CD4-positive, alpha-beta T cell (primary cell): ENCODE measurements at regions of chr16 and their contacts with region 1.

Region 1: GRCh38 chr16:70770626-70771552 is 30.1 kb downstream of the VAC14 start:
- DNase-seq: peak; percentile 17 to 66 (median 45)
- ATAC-seq: peak; percentile 84
- H3K4me3 ChIP-seq: no peak overlapping the region
- H3K4me3 Mint-ChIP-seq: no peak overlapping the region
- H3K27ac ChIP-seq: no peak overlapping the region
- H3K27ac Mint-ChIP-seq: no peak overlapping the region
- H3K4me1 ChIP-seq: no peaks in the 10 kb centered on the region
- H3K4me1 Mint-ChIP-seq: no peaks in the 10 kb centered on the region
- H3K27me3 ChIP-seq: no peaks in the 10 kb centered on the region
- H3K27me3 Mint-ChIP-seq: no peaks in the 10 kb centered on the region
- CTCF ChIP-seq: peak; percentile 86

Region 2: DNA sequence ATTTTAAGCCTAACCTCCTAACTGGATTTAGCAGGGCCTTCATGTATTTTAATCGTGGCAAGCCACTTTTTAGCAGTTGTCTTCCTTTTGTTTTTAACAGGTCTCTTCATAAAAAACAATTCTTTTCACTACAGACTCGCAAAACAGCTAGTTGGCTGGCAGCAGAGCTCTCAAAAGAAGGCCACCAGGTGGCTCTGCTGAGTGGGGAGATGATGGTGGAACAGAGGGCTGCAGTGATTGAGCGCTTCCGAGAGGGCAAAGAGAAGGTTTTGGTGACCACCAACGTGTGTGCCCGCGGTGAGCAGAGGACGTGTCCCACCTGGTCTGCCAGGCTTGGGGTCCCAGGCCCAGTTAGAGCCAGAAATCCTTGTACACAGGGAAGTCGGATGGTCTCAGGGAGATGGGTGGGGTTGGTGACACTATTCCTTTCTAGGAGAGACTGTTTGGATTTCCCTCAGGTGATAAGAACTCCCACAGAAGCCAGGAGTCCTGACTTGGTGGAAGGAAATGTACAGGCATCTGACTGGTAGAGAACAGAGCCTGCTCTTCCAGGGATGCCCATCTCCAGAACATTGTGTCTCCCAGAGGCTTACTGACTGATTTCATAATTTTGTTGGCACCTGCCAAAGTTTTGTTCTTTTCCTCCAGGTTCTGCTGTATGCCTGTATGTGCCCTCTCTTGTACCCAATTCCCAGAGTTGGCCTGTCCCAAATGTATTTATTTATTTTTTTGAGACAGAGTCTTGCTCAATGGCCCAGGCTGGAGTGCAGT is 439.1 kb before region 1 on chr16:
- CTCF ChIA-PET with region 1: no interaction called
- POLR2A ChIA-PET with region 1: no interaction called
- intact Hi-C with region 1: loop called in 1 of 2 experiments (anchors 10 kb)
- DNase-seq: peak in 7 of 14 experiments; percentile 5 to 33 (median 15)
- ATAC-seq: peak; percentile 68
- H3K4me3 ChIP-seq: no peak overlapping the region
- H3K4me3 Mint-ChIP-seq: no peak overlapping the region
- H3K27ac ChIP-seq: no peak overlapping the region
- H3K27ac Mint-ChIP-seq: no peak overlapping the region
- H3K4me1 ChIP-seq: no peaks in the 10 kb centered on the region
- H3K4me1 Mint-ChIP-seq: no peaks in the 10 kb centered on the region
- H3K27me3 ChIP-seq: no peaks in the 10 kb centered on the region
- H3K27me3 Mint-ChIP-seq: no peaks in the 10 kb centered on the region
- CTCF ChIP-seq: peak; percentile 58

Region 3: DNA sequence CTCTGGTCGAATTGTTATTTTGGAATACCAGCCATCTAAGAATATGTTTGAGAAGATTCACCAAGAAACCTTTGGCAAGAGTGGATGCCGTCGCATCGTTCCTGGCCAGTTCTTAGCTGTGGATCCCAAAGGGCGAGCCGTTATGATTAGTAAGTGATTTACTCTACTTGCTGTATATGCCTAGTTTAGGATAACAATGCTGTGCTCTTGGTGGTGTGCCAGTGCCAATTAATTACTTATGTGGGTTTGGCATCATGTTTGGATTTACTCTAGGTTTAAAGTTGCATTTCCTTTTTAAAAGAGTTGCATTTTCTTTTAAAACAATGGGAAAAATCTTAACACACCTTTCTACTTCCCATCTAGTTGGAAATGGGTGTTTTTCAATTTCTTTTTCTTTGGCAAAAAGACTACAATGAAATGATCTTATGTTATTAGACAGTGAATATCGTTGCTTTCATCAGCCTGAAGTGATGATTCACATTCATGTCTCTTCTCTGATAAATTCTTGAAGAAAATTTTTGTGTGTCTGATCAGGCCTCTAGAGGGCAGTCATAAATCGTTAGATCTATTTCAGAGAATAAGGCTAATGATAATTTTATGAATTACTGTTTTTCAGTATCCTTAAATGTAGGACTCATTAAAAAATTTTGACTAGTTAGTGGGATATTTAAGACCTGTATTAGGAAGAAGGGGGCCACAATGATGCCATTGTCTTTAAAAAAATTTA is 241.7 kb before region 1 on chr16:
- CTCF ChIA-PET with region 1: no interaction called
- POLR2A ChIA-PET with region 1: no interaction called
- intact Hi-C with region 1: loop called in 1 of 2 experiments (anchors 1 kb)
- DNase-seq: peak in 4 of 14 experiments; percentile 17 to 61 (median 53)
- ATAC-seq: peak; percentile 45
- H3K4me3 ChIP-seq: no peak overlapping the region
- H3K4me3 Mint-ChIP-seq: peak overlapping the region; percentile 64
- H3K27ac ChIP-seq: no peak overlapping the region
- H3K27ac Mint-ChIP-seq: peak overlapping the region; percentile 65
- H3K4me1 ChIP-seq: peaks cover 43% of the 10 kb centered on the region
- H3K4me1 Mint-ChIP-seq: peaks cover 55% of the 10 kb centered on the region
- H3K27me3 ChIP-seq: no peaks in the 10 kb centered on the region
- H3K27me3 Mint-ChIP-seq: no peaks in the 10 kb centered on the region
- CTCF ChIP-seq: peak; percentile 45

Region 4: DNA sequence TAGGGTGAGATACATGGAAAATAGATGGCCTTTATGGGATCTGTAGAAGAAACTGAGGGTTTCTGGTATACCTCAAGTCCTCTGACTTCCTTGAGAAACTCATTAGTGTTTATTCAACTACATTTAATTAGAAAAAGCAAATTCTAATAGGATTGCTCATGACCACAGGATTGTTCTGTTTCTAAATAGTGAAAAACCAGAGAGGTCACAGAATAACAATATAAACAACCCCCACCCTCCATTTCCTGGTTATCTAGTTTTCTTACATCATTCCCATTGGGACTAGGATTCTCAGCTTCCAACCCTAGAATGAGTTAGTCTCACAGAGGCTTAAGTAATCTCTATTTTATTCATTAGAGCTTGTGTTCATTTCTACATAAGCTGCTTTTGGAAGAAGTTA is 217.2 kb before region 1 on chr16:
- CTCF ChIA-PET with region 1: no interaction called
- POLR2A ChIA-PET with region 1: no interaction called
- intact Hi-C with region 1: loop called in 1 of 2 experiments (anchors 10 kb)
- DNase-seq: no peak
- ATAC-seq: no peak
- H3K4me3 ChIP-seq: no peak overlapping the region
- H3K4me3 Mint-ChIP-seq: no peak overlapping the region
- H3K27ac ChIP-seq: no peak overlapping the region
- H3K27ac Mint-ChIP-seq: peak overlapping the region; percentile 56
- H3K4me1 ChIP-seq: no peaks in the 10 kb centered on the region
- H3K4me1 Mint-ChIP-seq: peaks cover 31% of the 10 kb centered on the region
- H3K27me3 ChIP-seq: no peaks in the 10 kb centered on the region
- H3K27me3 Mint-ChIP-seq: no peaks in the 10 kb centered on the region
- CTCF ChIP-seq: no peak

Region 5: GRCh38 chr16:70679666-70680494 is 91.0 kb before region 1 on chr16:
- CTCF ChIA-PET with region 1: no interaction called
- POLR2A ChIA-PET with region 1: interaction called, 3 read pairs
- intact Hi-C with region 1: loop called (anchors 1 kb)
- DNase-seq: peak in 2 of 14 experiments; percentile 4 to 24
- ATAC-seq: peak; percentile 60
- H3K4me3 ChIP-seq: no peak overlapping the region
- H3K4me3 Mint-ChIP-seq: no peak overlapping the region
- H3K27ac ChIP-seq: no peak overlapping the region
- H3K27ac Mint-ChIP-seq: no peak overlapping the region
- H3K4me1 ChIP-seq: peaks cover 4% of the 10 kb centered on the region
- H3K4me1 Mint-ChIP-seq: no peaks in the 10 kb centered on the region
- H3K27me3 ChIP-seq: peaks cover 16 to 26% of the 10 kb centered on the region in 2 experiments
- H3K27me3 Mint-ChIP-seq: peaks cover 3% of the 10 kb centered on the region
- CTCF ChIP-seq: no peak

Region 6: GRCh38 chr16:70737377-70738082 is 33.4 kb before region 1 on chr16:
- CTCF ChIA-PET with region 1: interaction called, 5 read pairs
- POLR2A ChIA-PET with region 1: interaction called, 22 read pairs
- intact Hi-C with region 1: loop called (anchors 2 to 5 kb)
- DNase-seq: peak; percentile 33 to 80 (median 54)
- ATAC-seq: peak; percentile 85
- H3K4me3 ChIP-seq: peak overlapping the region; percentile 21
- H3K4me3 Mint-ChIP-seq: peak overlapping the region; percentile 76
- H3K27ac ChIP-seq: peak overlapping the region; percentile 73 to 81
- H3K27ac Mint-ChIP-seq: peak overlapping the region; percentile 98
- H3K4me1 ChIP-seq: peaks cover 47% of the 10 kb centered on the region
- H3K4me1 Mint-ChIP-seq: peaks cover 75% of the 10 kb centered on the region
- H3K27me3 ChIP-seq: no peaks in the 10 kb centered on the region
- H3K27me3 Mint-ChIP-seq: no peaks in the 10 kb centered on the region
- CTCF ChIP-seq: no peak